Right cardiac atrium (tissue), 5 donors: ENCODE measurements at regions of chr21 and their contacts with region 1.

Region 1: DNA sequence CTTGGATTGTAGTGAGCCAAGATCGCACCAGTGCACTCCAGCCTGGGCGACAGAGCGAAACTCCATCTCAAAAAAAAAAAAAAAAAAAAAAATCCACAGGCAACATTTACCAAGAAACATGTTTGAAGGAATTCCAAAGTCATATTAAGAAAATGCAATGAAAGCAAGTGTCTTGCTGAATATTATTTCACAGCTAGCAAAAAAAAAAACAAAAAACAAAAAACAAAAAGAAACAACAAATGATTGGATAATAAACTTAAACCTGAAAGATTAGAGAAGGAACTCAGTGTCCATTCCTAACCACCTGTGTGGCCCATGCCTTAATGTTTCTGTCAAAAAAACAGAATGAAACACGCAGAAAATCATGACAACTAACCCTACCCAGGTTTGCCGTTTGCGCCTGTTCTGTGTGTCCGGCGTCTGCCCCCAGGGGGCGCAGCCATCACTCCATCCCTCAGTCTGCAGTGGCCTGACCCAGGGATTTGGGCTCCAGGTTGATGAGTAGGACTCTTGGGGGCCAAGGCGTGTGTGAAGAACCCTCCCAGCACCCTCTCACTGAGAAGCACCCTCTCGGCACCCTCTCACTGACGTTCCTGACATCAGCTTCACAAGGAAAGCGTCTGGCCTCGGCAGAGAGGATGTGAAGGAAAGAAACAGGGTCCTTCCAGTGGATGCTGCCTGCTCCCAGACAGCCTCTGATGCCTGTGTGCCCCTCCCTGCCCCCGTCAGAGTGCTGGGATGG is 19.2 kb upstream of the PTTG1IP start:
- DNase-seq: peak; percentile 64 to 87 (median 85)
- ATAC-seq: peak in 1 of 2 donors; percentile 70
- H3K4me3 ChIP-seq: no peak overlapping the region
- H3K27ac ChIP-seq: no peak overlapping the region
- H3K4me1 ChIP-seq: no peaks in the 10 kb centered on the region
- H3K27me3 ChIP-seq: no peaks in the 10 kb centered on the region

Region 2: DNA sequence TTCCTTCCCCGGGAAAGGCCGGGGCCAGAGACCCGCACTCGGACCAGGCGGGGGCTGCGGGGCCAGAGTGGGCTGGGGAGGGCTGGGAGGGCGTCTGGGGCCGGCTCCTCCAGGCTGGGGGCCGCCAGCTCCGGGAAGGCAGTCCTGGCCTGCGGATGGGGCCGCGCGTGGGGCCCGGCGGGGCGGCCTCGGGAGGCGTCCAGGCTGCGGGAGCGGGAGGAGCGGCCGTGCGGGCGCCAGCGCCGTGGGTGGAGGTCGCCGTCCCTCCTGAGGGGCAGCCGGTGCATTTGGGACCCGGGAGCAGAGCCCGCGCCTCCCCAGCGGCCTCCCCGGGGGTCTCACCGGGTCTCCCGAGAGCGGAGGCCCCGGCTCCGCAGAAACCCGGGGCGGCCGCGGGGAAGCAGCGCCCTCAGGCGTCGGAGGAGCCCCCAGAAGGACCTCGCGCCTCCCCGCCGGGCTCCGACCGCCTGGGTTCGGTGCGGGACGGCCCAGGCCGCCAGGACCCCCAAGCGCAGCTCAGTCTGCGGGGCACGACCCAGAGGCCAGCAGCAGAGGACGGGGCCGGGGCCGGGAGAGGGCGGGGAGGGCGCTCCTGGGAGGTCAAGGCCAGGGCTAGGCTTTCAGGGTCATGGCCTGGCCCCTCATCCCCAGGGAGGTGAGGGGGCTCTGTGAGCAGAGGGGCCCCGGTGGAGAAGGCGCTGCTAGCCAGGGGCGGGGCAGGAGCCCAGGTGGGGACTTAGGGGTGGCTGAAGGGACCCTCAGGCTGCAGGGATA is 39.9 kb after region 1 on chr21:
- intact Hi-C with region 1: loop called in 1 of 4 experiments (anchors 5 kb)
- DNase-seq: peak in 2 of 3 donors; percentile 74 to 75
- ATAC-seq: peak; percentile 34 to 50
- H3K4me3 ChIP-seq: peak overlapping the region; percentile 50
- H3K27ac ChIP-seq: no peak overlapping the region
- H3K4me1 ChIP-seq: no peaks in the 10 kb centered on the region
- H3K27me3 ChIP-seq: no peaks in the 10 kb centered on the region

Region 3: GRCh38 chr21:45000977-45001728 is 108.4 kb after region 1 on chr21:
- intact Hi-C with region 1: no loop called
- DNase-seq: peak; percentile 72 to 88 (median 84)
- ATAC-seq: peak; percentile 65 to 77
- H3K4me3 ChIP-seq: no peak overlapping the region
- H3K27ac ChIP-seq: no peak overlapping the region
- H3K4me1 ChIP-seq: no peaks in the 10 kb centered on the region
- H3K27me3 ChIP-seq: no peaks in the 10 kb centered on the region